ENCODE measurements at regions of chr2 and their contacts with region 1.

Region 1: GRCh38 chr2:188291617-188292347 is at the start of gene GULP1:
- DNase-seq: no peak
- H3K4me3 ChIP-seq: peak within 1 kb of the TSS; percentile 82
- CTCF ChIP-seq: peak; percentile 80

Region 2: GRCh38 chr2:188089901-188090300 is 201.9 kb before region 1 on chr2:
- CTCF ChIA-PET with region 1: no interaction called
- POLR2A ChIA-PET with region 1: no interaction called
- DNase-seq: no peak
- H3K4me3 ChIP-seq: no peak overlapping the region
- CTCF ChIP-seq: no peak

Region 3: DNA sequence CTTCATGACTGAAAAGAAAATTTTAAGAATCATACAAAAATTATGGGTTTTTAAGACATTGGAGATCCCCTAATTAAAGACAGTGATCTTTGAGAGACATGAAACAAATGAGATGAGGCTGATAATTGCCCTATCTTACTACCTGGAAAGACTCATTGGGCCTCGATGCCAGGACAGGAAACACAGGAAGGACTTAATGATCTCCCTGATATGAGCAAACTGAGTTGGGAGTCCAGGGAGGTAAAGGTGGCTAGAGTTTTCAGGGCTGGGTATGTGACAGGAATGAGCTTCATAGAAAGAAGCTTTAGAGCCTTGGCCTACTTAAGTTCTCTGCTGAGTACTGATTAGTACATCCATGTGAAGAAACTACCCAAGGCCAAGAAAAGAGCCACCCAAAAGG is 40.8 kb before region 1 on chr2:
- CTCF ChIA-PET with region 1: no interaction called
- POLR2A ChIA-PET with region 1: no interaction called
- DNase-seq: no peak
- H3K4me3 ChIP-seq: no peak overlapping the region
- CTCF ChIP-seq: no peak

Region 4: DNA sequence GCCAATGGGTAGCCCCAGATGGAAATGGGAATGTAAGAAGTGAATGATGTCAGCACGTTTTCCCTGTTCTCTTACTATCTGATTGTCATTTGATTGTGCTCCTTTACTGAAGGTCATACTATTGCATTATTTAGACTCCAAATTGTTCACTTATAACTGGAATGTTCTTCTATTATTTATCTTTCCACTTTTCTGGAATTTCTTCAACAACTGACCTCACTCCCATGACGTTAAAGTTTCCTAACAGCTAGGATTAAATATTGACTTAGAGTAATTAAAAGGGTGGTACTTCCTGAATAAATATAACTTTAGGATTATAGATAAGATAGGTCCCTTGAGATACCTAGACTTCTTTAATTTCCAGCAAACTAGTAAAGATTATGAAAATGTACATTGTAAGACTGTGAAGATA is 11.0 kb before region 1 on chr2:
- CTCF ChIA-PET with region 1: interaction called, 11 read pairs
- POLR2A ChIA-PET with region 1: no interaction called
- DNase-seq: no peak
- H3K4me3 ChIP-seq: no peak overlapping the region
- CTCF ChIP-seq: no peak

Region 5: GRCh38 chr2:188307850-188308283 is 16.1 kb after region 1 on chr2:
- CTCF ChIA-PET with region 1: interaction called, 15 read pairs
- POLR2A ChIA-PET with region 1: interaction called, 7 read pairs
- DNase-seq: no peak
- H3K4me3 ChIP-seq: no peak overlapping the region
- CTCF ChIP-seq: no peak

Region 6: GRCh38 chr2:188319830-188320229 is 28.0 kb after region 1 on chr2:
- CTCF ChIA-PET with region 1: interaction called, 13 read pairs
- POLR2A ChIA-PET with region 1: interaction called, 7 read pairs
- DNase-seq: no peak
- H3K4me3 ChIP-seq: no peak overlapping the region
- CTCF ChIP-seq: no peak

Region 7: DNA sequence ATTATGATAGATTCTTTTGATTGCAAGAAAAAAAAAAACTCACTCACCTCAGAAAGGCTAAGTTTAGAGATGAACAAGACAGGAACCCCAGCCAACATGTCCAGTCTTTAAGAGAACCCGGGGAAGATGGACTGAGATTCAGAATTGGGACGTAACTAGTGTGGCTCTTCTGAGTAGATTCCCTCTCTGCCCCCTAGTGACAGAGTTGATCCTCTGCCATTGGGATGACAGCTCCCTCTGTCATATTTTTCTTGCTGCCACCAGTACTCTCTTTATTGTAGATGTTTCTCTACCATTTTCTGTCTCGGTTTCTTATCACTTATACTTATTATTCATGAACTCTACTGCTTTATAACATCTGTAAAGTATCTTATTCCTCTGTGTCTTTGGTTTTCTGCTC is 77.6 kb after region 1 on chr2:
- CTCF ChIA-PET with region 1: interaction called, 24 read pairs
- POLR2A ChIA-PET with region 1: no interaction called
- DNase-seq: no peak
- H3K4me3 ChIP-seq: no peak overlapping the region
- CTCF ChIP-seq: peak; percentile 68

Region 8: DNA sequence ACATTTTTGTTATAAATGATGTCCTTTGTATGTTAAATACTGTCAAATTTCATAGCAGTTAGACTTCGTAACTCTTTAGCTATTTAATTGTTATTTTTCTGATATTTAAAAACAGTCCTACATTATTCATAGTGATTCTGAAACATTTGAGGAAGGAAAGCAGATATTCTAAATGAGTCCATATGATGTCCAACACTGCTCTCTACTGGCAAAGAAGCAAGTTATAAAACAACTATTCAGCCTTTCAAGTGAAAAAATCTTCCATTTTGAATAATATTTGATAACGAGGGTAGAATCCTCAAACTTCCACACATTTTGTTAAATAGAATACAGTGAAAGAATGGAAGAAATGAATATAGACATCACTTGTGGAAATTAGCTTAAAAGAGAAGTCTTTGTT is 220.7 kb after region 1 on chr2:
- CTCF ChIA-PET with region 1: interaction called, 20 read pairs
- POLR2A ChIA-PET with region 1: no interaction called
- DNase-seq: no peak
- H3K4me3 ChIP-seq: no peak overlapping the region
- CTCF ChIP-seq: peak; percentile 17